GM10248 (cell line): ENCODE measurements at regions of chr3 and their contacts with region 1.

Region 1: DNA sequence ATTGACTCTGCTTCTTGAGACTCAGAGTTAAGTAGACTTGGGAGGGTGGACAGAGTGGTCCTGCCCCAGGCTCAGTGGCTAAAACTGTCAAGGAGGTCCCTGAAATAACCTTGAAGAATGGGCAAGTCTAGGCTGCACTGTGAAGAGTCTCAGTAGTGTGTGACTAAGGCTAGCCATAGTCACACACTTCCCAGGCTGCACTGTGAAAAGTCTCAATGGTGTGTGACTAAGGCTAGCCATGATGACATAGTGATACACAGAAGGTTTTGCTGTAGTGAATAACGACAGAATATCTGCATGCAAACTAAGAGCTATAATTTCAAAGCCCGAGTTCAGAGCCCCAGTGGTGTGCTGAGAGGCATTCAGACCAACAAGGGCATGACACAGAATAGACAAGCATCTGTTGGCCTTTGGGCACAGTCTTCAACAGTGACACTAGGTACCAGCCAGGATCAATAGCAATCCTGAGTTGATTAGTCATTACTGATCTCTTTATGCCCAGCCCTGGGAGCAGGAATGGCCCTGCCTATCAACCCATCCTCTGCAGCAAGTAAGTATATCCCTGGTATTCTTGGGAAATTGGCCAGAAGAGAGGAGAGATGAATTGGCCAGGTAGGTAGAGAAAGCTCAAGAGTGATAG is 72.4 kb upstream of the BBX start:
- DNase-seq: no peak
- CTCF ChIP-seq: no peak

Region 2: GRCh38 chr3:107284612-107285011 is 165.8 kb before region 1 on chr3:
- CTCF ChIA-PET with region 1: no interaction called
- POLR2A ChIA-PET with region 1: interaction called, 10 read pairs
- DNase-seq: no peak
- CTCF ChIP-seq: no peak

Region 3: DNA sequence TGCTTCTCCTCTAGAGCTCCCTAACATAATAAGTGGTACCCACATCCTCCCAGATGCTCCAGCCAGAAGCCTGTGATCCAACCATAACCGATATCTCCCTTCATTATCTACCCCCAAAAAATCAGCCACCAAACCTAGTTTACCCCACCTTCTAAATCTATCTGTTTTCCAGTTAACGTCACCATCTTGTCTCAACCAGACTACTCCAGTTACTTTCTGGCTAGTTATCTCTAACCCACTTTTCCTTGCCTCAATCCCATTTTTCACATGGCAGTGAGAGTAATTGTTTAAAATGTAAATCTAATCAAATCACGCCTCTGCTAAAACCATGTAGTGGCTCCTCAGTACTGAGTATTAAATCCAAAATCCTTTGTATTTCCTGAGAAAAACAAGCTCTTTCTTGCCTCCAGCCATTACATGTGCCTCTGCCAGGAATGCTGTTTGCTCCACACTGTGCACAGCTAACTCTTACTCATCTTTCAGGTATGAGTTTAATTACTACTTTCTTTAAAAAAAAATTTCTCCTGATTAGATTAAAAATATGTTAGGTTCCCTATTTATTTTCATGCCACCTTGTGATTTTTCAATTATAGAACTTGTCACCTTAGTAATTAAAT is 57.7 kb before region 1 on chr3:
- CTCF ChIA-PET with region 1: no interaction called
- POLR2A ChIA-PET with region 1: no interaction called
- DNase-seq: no peak
- CTCF ChIP-seq: no peak

Region 4: DNA sequence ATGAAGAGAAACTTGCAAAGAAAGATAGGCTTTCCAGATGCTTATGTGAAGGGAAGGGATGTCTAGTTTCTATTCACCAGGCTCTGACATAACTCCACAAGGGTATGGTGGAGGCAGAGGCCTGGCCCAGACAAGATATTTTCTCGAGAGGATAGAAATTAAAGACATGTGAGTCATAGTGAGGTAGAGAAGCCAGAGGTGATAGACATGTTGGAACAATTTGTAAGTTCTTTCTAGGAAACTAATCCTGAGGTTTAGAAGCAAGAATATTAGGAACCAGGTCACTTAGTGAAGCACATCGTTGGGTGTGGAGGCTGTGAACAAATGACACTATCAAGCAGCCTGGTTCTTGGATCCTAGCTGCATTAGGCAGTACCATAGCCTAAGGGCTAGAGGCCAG is 249.3 kb after region 1 on chr3:
- CTCF ChIA-PET with region 1: no interaction called
- POLR2A ChIA-PET with region 1: no interaction called
- DNase-seq: no peak
- CTCF ChIP-seq: no peak